CD4-positive, alpha-beta T cell (primary cell): ENCODE measurements at regions of chr5 and their contacts with region 1.

Region 1: DNA sequence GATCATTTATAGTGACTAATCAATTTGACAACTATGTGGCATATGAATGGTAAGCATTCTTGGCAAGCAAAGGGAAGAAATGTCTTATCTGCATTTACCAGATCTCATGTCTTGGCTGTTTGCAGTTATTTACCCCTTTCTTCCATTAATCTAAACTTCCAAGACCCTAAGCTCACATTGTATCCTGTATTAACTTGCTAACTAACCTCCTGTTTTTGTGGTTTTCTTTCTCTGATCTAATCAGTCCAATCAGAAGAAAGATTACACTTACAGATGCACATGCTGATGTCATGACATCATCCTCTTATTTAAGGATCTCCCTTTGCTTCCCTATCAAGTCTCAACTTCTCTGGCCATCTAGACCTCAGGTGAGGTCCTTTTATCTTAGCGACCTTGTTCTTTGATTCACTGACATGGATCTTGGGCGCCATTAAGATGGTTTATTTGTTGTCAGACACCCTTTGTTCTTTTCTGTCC is 95.5 kb downstream of the F2RL2 start:
- DNase-seq: peak in 1 of 14 experiments; percentile 51
- ATAC-seq: peak; percentile 49
- H3K4me3 ChIP-seq: no peak overlapping the region
- H3K4me3 Mint-ChIP-seq: no peak overlapping the region
- H3K27ac ChIP-seq: no peak overlapping the region
- H3K27ac Mint-ChIP-seq: no peak overlapping the region
- H3K4me1 ChIP-seq: peaks cover 22% of the 10 kb centered on the region
- H3K4me1 Mint-ChIP-seq: peaks cover 82% of the 10 kb centered on the region
- H3K27me3 ChIP-seq: no peaks in the 10 kb centered on the region
- H3K27me3 Mint-ChIP-seq: no peaks in the 10 kb centered on the region
- CTCF ChIP-seq: no peak

Region 2: GRCh38 chr5:76325876-76326491 is 201.7 kb before region 1 on chr5:
- CTCF ChIA-PET with region 1: no interaction called
- POLR2A ChIA-PET with region 1: no interaction called
- intact Hi-C with region 1: no loop called
- DNase-seq: peak in 11 of 14 experiments; percentile 13 to 88 (median 45)
- ATAC-seq: peak; percentile 87
- H3K4me3 ChIP-seq: no peak overlapping the region
- H3K4me3 Mint-ChIP-seq: peak overlapping the region; percentile 59
- H3K27ac ChIP-seq: peak overlapping the region; percentile 44 to 63
- H3K27ac Mint-ChIP-seq: peak overlapping the region; percentile 87
- H3K4me1 ChIP-seq: peaks cover 59% of the 10 kb centered on the region
- H3K4me1 Mint-ChIP-seq: peaks cover 63% of the 10 kb centered on the region
- H3K27me3 ChIP-seq: no peaks in the 10 kb centered on the region
- H3K27me3 Mint-ChIP-seq: no peaks in the 10 kb centered on the region
- CTCF ChIP-seq: no peak

Region 3: GRCh38 chr5:76489877-76490688 is 37.6 kb before region 1 on chr5:
- CTCF ChIA-PET with region 1: no interaction called
- POLR2A ChIA-PET with region 1: no interaction called
- intact Hi-C with region 1: loop called in 1 of 2 experiments (anchors 5 kb)
- DNase-seq: no peak
- ATAC-seq: no peak
- H3K4me3 ChIP-seq: no peak overlapping the region
- H3K4me3 Mint-ChIP-seq: no peak overlapping the region
- H3K27ac ChIP-seq: no peak overlapping the region
- H3K27ac Mint-ChIP-seq: no peak overlapping the region
- H3K4me1 ChIP-seq: peaks cover 9% of the 10 kb centered on the region
- H3K4me1 Mint-ChIP-seq: peaks cover 60% of the 10 kb centered on the region
- H3K27me3 ChIP-seq: no peaks in the 10 kb centered on the region
- H3K27me3 Mint-ChIP-seq: no peaks in the 10 kb centered on the region
- CTCF ChIP-seq: no peak

Region 4: DNA sequence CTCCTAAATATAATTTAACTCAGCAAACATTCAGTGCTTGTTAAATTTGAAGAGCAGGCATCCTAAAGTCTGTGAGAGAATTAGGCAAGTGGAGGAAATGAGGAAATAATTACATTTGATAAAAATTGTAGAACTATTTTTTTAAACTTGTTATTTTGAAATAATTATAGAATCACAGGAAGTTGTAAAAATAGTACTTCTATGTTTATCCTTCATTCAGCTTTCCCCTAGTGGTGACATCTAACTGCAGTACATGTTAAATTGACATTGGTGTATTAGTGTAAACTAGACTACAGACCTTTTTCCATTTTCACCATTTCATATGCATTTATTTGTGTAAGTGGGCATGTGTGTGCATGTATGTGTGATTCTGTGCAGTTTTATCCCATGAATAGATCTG is 43.8 kb after region 1 on chr5:
- CTCF ChIA-PET with region 1: no interaction called
- POLR2A ChIA-PET with region 1: no interaction called
- intact Hi-C with region 1: no loop called
- DNase-seq: no peak
- ATAC-seq: no peak
- H3K4me3 ChIP-seq: no peak overlapping the region
- H3K4me3 Mint-ChIP-seq: no peak overlapping the region
- H3K27ac ChIP-seq: no peak overlapping the region
- H3K27ac Mint-ChIP-seq: peak overlapping the region; percentile 45
- H3K4me1 ChIP-seq: no peaks in the 10 kb centered on the region
- H3K4me1 Mint-ChIP-seq: peaks cover 19% of the 10 kb centered on the region
- H3K27me3 ChIP-seq: no peaks in the 10 kb centered on the region
- H3K27me3 Mint-ChIP-seq: no peaks in the 10 kb centered on the region
- CTCF ChIP-seq: no peak